A673 (cell line): ENCODE measurements at regions of chrX and their contacts with region 1.

Region 1: DNA sequence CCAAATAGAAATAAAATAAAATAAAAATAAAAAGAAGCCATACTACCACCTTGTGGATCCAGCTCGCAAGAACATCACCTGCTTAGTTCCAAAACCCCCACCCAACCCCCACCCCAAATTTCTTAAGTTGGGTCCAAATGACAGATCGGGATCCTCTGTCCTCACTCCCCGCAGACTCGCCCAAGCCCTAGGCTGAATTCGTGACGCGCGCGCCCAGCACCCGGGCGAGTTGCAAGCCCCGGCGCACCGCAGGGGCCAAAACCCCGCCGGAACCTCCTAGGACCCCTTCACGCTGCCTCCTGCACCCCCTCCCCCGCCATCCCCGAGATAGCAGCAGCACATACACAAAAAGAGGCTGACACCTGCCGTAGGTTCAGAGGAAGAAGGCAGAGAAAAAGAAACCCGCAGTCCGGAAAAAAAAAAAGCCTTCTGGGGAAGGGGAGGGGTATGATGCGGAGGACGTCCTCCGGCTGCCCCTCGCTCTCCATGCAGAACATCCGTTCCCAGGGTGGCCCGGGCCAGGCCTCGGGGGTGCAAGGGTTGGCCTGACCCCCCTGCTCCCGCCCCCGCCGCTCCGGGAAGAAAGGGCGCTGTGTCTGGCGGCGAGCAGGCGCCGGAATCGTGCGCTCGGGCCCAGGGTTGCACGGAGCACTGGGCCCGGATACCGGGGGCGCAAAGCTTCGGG is 2.6 kb downstream of the NLGN4X start:
- DNase-seq: peak; percentile 69
- H3K4me3 ChIP-seq: peak overlapping the region; percentile 95
- H3K27ac ChIP-seq: peak overlapping the region; percentile 88
- H3K4me1 ChIP-seq: peaks cover 14% of the 10 kb centered on the region
- H3K27me3 ChIP-seq: peaks cover 3% of the 10 kb centered on the region
- CTCF ChIP-seq: peak; percentile 50; the same call in 1 of the 2 replicates

Region 2: DNA sequence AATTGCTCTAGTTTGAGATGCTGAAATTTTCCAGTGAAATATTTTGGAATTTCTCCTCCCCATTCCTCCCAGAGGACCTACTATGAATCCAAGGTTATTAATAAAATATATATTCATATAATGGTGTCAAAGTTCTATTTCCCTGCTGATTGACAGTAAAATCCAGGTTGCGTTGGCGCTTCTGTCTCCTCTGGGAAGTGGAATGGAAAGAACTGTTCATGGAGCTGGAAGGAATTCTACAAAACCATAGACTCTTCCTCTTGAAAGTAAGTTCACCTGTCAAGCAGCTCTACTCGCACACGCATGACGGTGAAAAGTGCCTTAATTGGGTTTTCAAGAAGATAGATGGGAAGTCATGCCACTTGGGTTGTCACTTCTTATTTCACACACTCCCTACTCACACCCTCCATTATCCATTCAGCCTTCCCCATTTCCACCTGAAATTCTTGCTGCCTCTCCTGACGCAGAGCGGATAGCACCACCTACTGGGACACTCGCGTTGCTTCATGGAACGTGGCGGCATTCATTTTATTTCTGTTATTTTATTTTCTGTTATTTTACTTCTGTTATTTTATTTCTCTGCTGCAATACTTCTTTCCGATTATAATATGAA is 349.0 kb before region 1 on chrX:
- CTCF ChIA-PET with region 1: no interaction called
- POLR2A ChIA-PET with region 1: no interaction called
- intact Hi-C with region 1: loop called (anchors 5 kb)
- DNase-seq: peak; percentile 82
- H3K4me3 ChIP-seq: no peak overlapping the region
- H3K27ac ChIP-seq: peak overlapping the region; percentile 45
- H3K4me1 ChIP-seq: peaks cover 25% of the 10 kb centered on the region
- H3K27me3 ChIP-seq: no peaks in the 10 kb centered on the region
- CTCF ChIP-seq: peak; percentile 86

Region 3: DNA sequence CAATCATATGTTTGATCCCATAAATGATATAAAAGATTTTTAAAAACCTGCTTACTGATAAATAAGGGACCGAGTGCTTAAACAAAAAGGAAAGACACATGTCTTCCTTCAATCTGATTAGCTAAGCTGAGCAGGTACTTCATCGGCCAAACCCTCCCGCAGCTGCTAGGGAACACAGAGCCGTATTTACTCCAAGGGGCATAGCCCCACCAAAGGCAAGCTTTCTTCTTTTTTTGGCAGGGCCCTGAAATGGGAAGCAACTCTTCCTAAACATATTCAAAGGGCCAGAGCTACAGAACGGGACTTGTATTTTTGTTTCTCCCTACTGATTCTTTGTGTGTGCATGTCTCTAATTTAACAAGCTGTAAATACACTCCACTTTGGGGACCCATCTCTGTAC is 334.7 kb before region 1 on chrX:
- CTCF ChIA-PET with region 1: no interaction called
- POLR2A ChIA-PET with region 1: no interaction called
- intact Hi-C with region 1: loop called (anchors 5 kb)
- DNase-seq: no peak
- H3K4me3 ChIP-seq: no peak overlapping the region
- H3K27ac ChIP-seq: no peak overlapping the region
- H3K4me1 ChIP-seq: no peaks in the 10 kb centered on the region
- H3K27me3 ChIP-seq: no peaks in the 10 kb centered on the region
- CTCF ChIP-seq: no peak

Region 4: GRCh38 chrX:6021316-6022091 is 204.5 kb before region 1 on chrX:
- CTCF ChIA-PET with region 1: no interaction called
- POLR2A ChIA-PET with region 1: no interaction called
- intact Hi-C with region 1: loop called (anchors 2 kb)
- DNase-seq: peak; percentile 80
- H3K4me3 ChIP-seq: no peak overlapping the region
- H3K27ac ChIP-seq: no peak overlapping the region
- H3K4me1 ChIP-seq: peaks cover 16% of the 10 kb centered on the region
- H3K27me3 ChIP-seq: no peaks in the 10 kb centered on the region
- CTCF ChIP-seq: peak; percentile 88

Region 5: DNA sequence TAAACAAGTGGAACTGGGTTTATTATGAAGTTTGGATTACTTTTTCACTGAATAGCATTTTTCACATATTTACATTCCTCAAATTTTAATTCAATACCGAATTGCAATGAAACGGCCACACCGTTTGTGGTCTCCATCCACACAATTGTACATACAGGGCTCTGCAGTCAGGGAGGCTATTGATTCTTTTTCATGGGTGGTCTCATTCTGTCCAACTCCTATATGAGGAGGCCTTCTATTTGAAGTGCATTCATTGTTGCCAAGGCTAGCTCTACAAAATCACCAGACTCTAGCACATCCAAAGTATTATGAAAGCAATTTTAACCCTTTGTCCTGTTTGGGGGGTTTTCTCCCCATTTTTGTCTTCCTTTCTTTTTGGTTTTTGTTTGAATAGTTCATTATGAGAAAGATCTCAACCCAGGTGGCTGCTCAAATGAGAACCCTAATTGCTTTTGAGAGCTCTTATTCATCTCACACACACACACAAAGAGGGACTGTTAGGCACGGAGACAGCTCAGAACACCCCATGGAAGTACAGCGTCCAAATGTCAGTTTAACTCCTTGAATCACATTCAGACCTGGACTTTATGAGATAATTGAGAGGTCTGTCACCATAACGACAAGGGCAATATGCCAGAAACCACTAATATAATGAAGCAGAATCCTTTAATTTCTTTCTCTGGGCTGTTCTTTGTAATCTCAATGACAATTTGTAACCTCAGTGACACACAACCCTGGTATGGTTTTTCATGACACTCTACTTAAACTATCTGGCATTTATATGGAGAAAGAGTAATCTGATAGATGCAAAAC is 76.8 kb before region 1 on chrX:
- CTCF ChIA-PET with region 1: no interaction called
- POLR2A ChIA-PET with region 1: no interaction called
- intact Hi-C with region 1: no loop called
- DNase-seq: peak; percentile 47
- H3K4me3 ChIP-seq: no peak overlapping the region
- H3K27ac ChIP-seq: no peak overlapping the region
- H3K4me1 ChIP-seq: peaks cover 7% of the 10 kb centered on the region
- H3K27me3 ChIP-seq: no peaks in the 10 kb centered on the region
- CTCF ChIP-seq: no peak

Region 6: DNA sequence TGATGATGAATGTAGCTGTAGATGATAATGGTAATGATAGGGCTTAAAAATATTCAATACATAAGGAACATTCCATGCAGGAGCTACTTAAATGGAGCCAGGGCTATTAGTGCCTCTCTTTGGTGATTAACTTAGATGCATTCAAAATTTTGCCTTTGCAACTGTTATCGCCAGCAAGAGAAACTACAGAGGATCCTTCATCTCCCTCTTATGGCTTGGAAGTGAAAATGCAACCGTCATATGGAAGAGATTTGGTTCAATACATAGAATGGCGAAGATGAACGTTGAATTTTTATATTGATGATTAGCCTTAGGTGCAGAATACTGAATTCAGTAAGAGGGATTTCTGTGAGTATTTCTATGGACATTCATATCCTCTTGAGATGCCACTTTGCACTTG is 137.1 kb after region 1 on chrX:
- CTCF ChIA-PET with region 1: no interaction called
- POLR2A ChIA-PET with region 1: no interaction called
- intact Hi-C with region 1: loop called (anchors 5 kb)
- DNase-seq: peak; percentile 68
- H3K4me3 ChIP-seq: no peak overlapping the region
- H3K27ac ChIP-seq: no peak overlapping the region
- H3K4me1 ChIP-seq: peaks cover 7% of the 10 kb centered on the region
- H3K27me3 ChIP-seq: no peaks in the 10 kb centered on the region
- CTCF ChIP-seq: peak; percentile 62

Region 7: DNA sequence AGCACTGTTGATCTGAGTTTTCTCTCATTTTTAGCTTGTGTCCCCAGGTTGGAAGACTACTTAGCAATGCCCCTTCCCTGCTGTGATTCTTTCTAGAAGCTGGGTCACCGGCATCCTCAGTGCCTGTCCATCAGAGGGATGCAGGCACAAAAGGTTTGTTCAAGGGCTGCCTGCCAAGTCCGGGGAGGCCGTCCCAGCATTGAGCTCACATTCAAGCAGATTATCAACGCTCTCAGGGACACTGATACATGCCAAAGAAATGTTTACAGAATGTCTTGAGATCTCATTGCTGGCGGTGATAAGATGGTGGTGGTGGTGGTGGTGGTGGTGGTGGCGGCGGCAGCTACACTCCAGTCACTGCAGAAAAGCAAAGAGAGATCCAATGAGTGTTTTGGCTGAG is 388.5 kb after region 1 on chrX:
- CTCF ChIA-PET with region 1: no interaction called
- POLR2A ChIA-PET with region 1: no interaction called
- intact Hi-C with region 1: no loop called
- DNase-seq: no peak
- H3K4me3 ChIP-seq: no peak overlapping the region
- H3K27ac ChIP-seq: no peak overlapping the region
- H3K4me1 ChIP-seq: no peaks in the 10 kb centered on the region
- H3K27me3 ChIP-seq: no peaks in the 10 kb centered on the region
- CTCF ChIP-seq: no peak